ENCODE measurements at regions of chr20 and their contacts with region 1.

Region 1: DNA sequence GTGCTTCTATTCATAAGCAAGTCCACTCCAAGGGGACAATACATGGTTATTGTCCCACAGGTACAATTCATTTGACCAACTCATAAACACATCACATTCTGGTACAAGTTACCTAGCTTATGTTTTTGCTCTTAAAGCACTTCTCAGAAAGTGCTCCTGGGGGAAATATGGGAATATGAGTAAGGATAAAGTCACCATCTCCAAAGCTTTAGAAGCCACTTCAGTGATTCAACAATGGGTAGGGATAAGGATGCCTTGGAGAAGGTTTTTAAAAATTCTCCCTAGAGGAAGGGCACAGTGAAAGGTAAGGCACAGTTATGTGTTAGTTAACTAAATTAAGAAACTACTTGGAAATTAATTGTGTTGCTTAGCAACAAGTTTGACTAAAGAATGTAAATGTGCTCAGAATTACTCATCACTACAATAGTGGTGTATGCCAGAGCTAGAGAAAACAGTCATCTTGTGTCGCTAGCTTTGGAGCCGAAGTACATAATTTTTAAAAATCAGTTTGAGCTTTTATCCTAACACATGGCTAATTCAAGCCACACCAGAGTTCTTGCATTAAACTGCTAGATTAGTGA is 39.5 kb upstream of the LAMP5 start:
- DNase-seq: no peak
- H3K4me3 ChIP-seq: no peak overlapping the region
- H3K4me3 Mint-ChIP-seq: no peak overlapping the region
- H3K27ac ChIP-seq: no peak overlapping the region
- H3K27ac Mint-ChIP-seq: no peak overlapping the region
- H3K4me1 ChIP-seq: no peaks in the 10 kb centered on the region
- H3K4me1 Mint-ChIP-seq: peaks cover 6% of the 10 kb centered on the region
- H3K27me3 ChIP-seq: no peaks in the 10 kb centered on the region
- H3K27me3 Mint-ChIP-seq: peaks cover 0 to 6% (median 2%) of the 10 kb centered on the region in 3 donors
- CTCF ChIP-seq: no peak

Region 2: GRCh38 chr20:9412309-9412708 is 62.6 kb before region 1 on chr20:
- intact Hi-C with region 1: no loop called
- DNase-seq: no peak
- H3K4me3 ChIP-seq: no peak overlapping the region
- H3K4me3 Mint-ChIP-seq: no peak overlapping the region
- H3K27ac ChIP-seq: no peak overlapping the region
- H3K27ac Mint-ChIP-seq: no peak overlapping the region
- H3K4me1 ChIP-seq: no peaks in the 10 kb centered on the region
- H3K4me1 Mint-ChIP-seq: no peaks in the 10 kb centered on the region
- H3K27me3 ChIP-seq: no peaks in the 10 kb centered on the region
- H3K27me3 Mint-ChIP-seq: peaks cover 1 to 4% (median 2%) of the 10 kb centered on the region in 3 donors
- CTCF ChIP-seq: no peak

Region 3: GRCh38 chr20:9520086-9520485 is 45.2 kb after region 1 on chr20:
- intact Hi-C with region 1: loop called in 1 of 2 experiments (anchors 10 kb)
- DNase-seq: no peak
- H3K4me3 ChIP-seq: no peak overlapping the region
- H3K4me3 Mint-ChIP-seq: peak overlapping the region in 1 of 2 donors; percentile 59
- H3K27ac ChIP-seq: no peak overlapping the region
- H3K27ac Mint-ChIP-seq: no peak overlapping the region
- H3K4me1 ChIP-seq: peaks cover 28 to 31% of the 10 kb centered on the region in 2 donors
- H3K4me1 Mint-ChIP-seq: peaks cover 33% of the 10 kb centered on the region
- H3K27me3 ChIP-seq: peaks cover 27 to 36% of the 10 kb centered on the region in 2 donors
- H3K27me3 Mint-ChIP-seq: peaks cover 39 to 44% (median 44%) of the 10 kb centered on the region in 3 donors
- CTCF ChIP-seq: no peak